HEK293 (cell line): ENCODE measurements at regions of chr11 and their contacts with region 1.

Region 1: GRCh38 chr11:116193321-116194131 is 579.3 kb downstream of the BUD13 start:
- H3K4me3 ChIP-seq: peak overlapping the region; percentile 40
- H3K27ac ChIP-seq: no peak overlapping the region
- H3K4me1 ChIP-seq: no peaks in the 10 kb centered on the region
- CTCF ChIP-seq: no peak

Region 2: GRCh38 chr11:114243461-114244372 is 1949.8 kb before region 1 on chr11:
- CTCF ChIA-PET with region 1: no interaction called
- POLR2A ChIA-PET with region 1: interaction called, 13 read pairs
- H3K4me3 ChIP-seq: no peak overlapping the region
- H3K27ac ChIP-seq: no peak overlapping the region
- H3K4me1 ChIP-seq: no peaks in the 10 kb centered on the region
- CTCF ChIP-seq: no peak

Region 3: DNA sequence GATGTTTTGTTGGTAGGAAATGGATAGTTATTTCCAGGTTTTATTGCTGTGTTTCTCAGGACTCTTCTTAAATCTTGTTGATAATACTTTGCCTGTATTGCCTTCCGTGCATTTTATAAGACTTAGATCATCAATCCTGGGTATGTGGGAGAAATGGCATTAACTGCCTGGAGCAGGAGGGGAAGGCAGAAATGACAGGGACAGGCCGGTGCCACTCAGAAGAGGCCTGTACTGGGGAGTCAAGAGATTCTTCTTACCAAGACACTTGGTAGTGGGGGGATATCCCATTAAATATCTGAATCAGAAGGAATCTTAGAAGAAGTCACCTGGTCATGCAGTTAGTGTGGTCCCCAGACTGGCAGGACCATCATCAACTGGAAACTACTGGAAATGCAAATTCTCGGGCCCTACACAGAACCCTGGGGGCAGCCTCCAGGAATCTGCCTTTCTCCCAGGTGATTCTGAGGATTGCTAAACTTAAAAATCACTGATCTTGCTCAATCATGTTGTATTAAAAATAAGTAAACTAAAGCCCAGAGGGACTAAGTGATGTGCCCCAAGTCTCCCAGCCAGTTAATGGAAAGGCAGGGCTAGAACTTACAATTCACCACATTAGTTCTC is 10.3 kb before region 1 on chr11:
- CTCF ChIA-PET with region 1: no interaction called
- POLR2A ChIA-PET with region 1: no interaction called
- H3K4me3 ChIP-seq: no peak overlapping the region
- H3K27ac ChIP-seq: no peak overlapping the region
- H3K4me1 ChIP-seq: no peaks in the 10 kb centered on the region
- CTCF ChIP-seq: no peak

Region 4: DNA sequence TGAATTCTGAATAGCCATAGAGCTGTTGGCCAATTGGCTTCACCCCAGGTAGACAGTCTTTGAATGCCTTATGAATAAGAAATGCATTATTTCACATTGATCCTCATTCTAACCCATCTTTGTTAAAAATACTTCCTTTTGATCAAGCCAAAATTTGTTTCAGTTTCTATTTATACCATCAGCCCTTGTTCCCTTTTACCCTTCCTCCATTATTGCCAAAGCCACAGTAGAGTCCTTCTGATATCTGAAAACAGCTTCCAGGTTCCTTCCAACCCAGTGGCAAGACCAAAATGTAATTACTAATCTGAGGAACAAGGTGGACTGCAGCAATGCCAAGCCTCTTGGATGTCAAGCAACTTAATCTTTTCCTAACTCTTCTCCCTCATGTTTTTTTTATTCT is 120.5 kb after region 1 on chr11:
- CTCF ChIA-PET with region 1: no interaction called
- POLR2A ChIA-PET with region 1: no interaction called
- H3K4me3 ChIP-seq: no peak overlapping the region
- H3K27ac ChIP-seq: no peak overlapping the region
- H3K4me1 ChIP-seq: no peaks in the 10 kb centered on the region
- CTCF ChIP-seq: no peak